Right ventricle myocardium superior (tissue), 1 donor: ENCODE measurements at regions of chr18 and their contacts with region 1.

Region 1: DNA sequence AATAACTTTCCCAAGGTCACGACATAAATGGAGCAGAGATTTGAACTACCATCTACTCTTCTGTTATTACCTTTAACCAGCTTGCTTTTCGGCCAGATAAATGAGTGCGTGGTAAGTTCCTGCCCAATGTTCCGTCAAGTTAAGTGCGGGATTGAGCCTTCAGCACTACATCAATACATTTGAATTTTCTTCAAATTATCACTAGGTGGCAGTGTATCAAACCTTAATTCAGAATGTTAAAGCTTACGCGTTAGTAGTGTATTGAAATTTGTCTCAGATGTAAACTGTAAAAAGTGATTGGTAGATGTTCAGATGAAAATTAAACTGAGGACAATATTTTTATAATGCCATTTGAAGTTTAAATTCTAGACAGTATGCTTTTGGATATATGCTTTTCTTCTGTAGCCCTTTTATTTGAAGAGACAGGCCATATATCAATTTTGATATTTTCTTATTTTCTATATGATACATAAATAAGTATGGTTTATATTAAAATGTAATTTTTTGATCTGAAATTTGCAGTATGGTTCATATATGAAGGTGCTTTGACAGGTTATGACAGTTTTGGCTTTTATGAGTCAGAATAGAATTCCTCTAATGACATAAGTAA is 681.3 kb downstream of the ADCYAP1 start:
- DNase-seq: no peak
- ATAC-seq: peak; percentile 78

Region 2: DNA sequence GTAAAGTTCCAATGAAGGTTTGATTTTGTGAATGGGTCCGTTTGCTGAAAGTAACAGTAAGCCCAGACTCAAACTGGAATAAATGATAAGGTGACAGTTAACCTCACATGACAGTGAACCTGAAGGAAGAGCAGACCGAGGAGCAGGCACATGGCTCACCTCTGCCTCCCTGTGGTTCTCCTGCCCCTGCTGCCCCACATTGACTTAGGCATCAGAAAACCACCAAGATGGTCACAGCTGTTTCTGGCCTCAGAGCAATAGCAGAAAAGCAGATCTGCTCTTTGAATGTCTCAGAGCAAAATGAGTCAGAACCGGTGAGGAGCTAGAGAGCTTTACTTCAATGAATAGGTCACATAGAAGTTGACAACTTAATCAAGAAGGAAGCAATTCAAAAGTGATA is 497.7 kb after region 1 on chr18:
- intact Hi-C with region 1: loop called (anchors 5 kb)
- DNase-seq: no peak
- ATAC-seq: no peak

Region 3: DNA sequence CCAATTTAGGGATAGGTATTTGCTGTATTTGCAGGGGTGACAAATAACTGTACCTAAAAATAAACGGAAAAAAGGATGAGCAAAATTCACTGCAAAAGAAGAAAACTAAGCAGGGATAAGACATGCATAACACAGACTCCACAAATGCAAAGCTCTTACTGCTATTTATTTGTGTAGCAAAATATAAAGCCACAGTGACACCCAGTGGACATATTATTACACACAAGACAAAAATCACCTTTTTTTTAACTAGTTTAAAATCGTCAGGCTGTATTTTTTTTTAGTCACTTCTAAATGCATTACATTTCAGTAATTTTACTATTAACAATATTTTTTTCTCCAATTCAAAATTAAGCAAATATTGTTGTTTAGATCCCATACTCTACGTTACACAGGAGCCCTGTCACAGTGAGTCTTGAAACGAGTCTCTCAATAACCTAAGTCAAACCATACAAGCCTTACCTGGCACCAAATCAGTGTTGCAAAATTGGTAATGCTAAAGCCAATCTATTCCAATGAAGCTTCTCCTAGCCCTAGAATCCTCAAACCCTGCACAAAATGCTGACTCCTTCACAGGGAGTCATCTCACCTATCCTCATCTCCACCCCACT is 961.6 kb after region 1 on chr18:
- intact Hi-C with region 1: loop called (anchors 10 kb)
- DNase-seq: no peak
- ATAC-seq: peak; percentile 57